Activated T-helper 1 cell treated with anti-CD3 and anti-CD28 coated beads, Interleukin-12 subunit alpha, Interleukin-12 subunit beta, Interleukin-2, Interleukin-4 antibody, amounts not matched to agents 30 ng/mL and 10 ng/mL and 1 ng/mL, durations not matched to agents 14 hours and 24 hours and 36 hours (primary cell): ENCODE measurements at regions of chr14 and their contacts with region 1.

Region 1: DNA sequence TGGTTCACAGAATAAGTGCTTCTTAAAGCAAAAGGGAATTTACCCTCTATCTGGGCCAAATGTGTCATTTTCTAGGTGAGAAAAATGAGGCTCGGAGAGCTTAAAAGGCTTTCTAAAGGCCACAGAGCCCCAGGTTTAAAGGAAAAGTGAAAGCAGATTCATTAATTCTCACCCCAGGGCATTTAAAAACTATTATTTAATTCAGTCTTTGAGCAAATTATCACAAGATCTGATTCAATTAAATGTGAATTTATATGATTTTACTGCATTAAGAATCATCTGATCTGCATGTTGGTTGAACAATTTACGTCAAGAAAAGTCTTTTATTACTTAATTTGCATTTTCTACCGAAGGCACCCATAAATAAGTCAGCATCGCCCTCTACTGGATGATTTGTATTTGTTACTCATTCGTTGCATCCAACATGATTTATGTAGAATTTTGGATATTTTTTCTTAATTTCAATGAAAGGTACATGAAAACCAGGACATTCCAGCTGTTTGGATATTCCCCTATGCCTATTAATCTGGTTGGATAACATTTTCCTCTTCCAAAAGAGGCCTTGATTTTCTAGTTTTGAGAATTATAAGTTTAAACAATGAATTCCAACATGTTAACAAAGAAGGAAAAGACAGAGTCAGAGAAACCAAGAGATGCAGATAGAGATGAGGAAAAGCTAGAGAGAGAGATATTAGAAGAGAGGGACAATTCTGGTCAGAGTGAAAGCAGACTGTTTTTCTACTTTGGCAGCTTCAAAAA is 19.1 kb upstream of the DHRS7 start:
- DNase-seq: no peak
- H3K4me3 Mint-ChIP-seq: peak overlapping the region; percentile 65
- H3K27ac Mint-ChIP-seq: peak overlapping the region; percentile 67
- H3K4me1 Mint-ChIP-seq: peaks cover 13% of the 10 kb centered on the region
- H3K27me3 Mint-ChIP-seq: no peaks in the 10 kb centered on the region

Region 2: GRCh38 chr14:59126710-59127432 is 1057.5 kb before region 1 on chr14:
- intact Hi-C with region 1: loop called (anchors 5 kb)
- DNase-seq: peak; percentile 1
- H3K4me3 Mint-ChIP-seq: no peak overlapping the region
- H3K27ac Mint-ChIP-seq: no peak overlapping the region
- H3K4me1 Mint-ChIP-seq: no peaks in the 10 kb centered on the region
- H3K27me3 Mint-ChIP-seq: peaks cover 2% of the 10 kb centered on the region

Region 3: DNA sequence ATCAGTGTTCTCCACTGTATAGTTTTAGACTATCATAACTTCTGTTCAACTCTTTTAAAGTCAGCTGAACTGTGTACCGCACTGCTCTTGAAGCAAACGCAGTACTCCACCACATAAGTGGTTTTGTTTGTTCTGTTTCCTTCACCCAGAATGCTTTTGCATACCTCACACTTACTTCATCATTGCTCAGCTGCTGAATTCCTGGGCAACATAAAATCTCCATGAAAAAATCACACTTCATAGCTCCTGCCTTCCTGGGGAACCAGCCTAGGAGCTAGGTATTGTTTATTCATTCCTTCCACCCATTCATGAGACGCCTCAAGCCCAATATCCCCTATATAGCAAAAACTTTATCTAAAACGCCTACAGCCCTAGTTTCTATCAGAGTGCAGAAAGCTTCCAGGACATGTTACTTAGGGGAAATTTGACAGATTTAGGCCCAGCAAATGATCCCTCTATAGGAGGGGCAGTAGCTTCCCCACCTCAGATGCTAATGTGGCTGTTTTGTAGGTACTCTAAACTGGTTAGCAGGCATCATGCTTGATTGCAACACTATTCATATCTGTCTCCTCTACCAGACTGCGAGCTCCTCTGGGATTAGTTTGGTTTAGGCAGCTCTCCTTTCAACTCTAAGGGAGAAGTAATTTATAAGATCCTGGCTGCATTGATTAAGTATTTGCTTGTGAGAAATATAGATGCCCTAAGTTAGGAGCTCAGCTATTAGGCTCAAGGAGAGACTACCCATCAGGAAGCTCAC is 219.9 kb before region 1 on chr14:
- intact Hi-C with region 1: loop called (anchors 1 kb)
- DNase-seq: no peak
- H3K4me3 Mint-ChIP-seq: peak overlapping the region; percentile 80
- H3K27ac Mint-ChIP-seq: no peak overlapping the region
- H3K4me1 Mint-ChIP-seq: no peaks in the 10 kb centered on the region
- H3K27me3 Mint-ChIP-seq: peaks cover 7% of the 10 kb centered on the region

Region 4: DNA sequence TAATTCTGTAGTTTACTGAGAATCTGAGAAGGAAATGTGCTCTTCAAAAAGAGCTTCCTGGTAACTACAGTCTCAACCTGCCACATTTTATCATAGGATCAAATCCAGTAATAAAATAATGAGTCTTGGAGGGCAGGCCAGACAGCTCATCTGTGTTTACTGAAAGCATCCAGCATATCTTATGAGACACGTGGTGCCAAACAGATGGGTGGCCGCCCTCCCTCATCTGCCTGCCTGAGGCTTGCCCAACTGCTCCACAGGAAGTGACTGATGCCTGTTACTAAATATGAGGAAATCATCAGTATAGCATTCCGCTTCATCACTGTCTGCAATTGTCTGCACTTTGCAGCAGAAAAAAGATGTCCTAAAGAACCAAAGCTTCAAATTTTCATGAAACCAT is 32.6 kb before region 1 on chr14:
- intact Hi-C with region 1: loop called (anchors 1 kb)
- DNase-seq: peak; percentile 50
- H3K4me3 Mint-ChIP-seq: peak overlapping the region; percentile 26
- H3K27ac Mint-ChIP-seq: peak overlapping the region; percentile 87
- H3K4me1 Mint-ChIP-seq: peaks cover 42% of the 10 kb centered on the region
- H3K27me3 Mint-ChIP-seq: no peaks in the 10 kb centered on the region

Region 5: DNA sequence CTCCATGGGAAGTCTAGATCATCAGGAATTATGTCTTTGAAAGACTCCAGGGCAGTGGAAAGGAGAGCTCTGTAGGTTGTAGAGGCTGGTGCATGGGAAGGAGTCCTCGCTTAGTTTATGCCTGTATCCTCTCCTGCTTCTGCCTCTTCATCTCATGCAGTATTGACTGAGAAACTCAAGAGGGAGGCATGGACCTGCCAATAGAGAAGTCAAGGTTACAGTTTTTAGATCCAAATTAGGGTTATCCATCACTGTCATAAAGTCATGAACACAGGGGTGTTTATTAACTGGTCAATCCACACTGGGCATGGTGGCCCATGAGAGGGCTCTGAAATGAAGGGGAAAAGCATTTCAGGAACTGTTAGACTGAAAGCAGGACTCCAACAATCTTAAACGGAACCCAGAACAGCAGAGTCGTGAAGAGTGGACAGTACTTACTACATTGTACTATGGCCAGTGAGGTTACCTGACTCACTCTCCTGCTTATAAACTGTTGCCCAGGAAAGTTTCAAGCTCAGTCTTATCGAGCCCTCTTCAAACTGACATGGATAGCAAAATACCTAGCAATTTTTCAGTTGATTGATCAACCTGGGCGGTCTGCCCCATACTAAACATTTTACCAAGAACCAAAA is 11.0 kb after region 1 on chr14:
- intact Hi-C with region 1: no loop called
- DNase-seq: no peak
- H3K4me3 Mint-ChIP-seq: no peak overlapping the region
- H3K27ac Mint-ChIP-seq: no peak overlapping the region
- H3K4me1 Mint-ChIP-seq: no peaks in the 10 kb centered on the region
- H3K27me3 Mint-ChIP-seq: peaks cover 9% of the 10 kb centered on the region

Region 6: DNA sequence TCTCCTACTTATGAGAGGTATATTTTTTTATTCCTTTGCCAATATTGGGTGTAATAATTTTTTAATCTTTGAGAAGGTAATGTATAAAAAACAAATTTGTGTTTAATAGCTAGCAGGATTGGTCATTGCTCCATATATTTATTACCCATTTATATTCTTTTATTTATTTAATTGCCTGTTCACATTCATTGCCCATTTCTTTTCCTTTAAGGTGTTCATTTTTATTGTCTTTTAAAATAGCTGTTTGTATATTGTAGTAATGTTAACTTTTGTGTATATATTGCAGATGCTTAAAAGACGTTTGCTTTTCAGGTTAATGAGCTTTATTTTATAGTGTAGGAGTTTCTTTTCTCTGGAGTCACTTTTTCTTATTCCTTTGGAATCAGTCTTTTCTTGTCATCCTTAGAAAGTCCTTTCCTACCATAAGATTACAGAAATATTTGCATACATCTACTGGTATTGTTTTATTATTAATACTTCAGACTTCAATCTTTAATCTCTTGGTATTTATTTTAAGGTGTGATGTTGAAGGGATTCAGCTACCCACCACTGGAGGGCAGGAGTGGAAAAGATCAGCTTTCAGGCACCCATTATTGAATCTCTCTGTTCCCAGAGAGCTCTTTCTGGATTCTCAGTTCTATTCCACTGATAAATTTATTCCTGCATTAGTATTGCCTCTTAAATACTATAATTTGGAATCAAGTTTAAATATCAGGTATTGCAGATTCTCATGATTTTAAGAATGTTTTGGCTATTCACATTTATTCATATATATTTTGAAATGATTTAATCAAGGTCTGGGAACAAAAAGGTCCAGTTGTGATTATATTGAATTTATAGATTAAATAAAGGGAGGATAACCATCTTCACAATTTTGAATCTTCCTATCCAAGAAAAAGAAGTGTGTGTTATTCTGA is 82.0 kb after region 1 on chr14:
- intact Hi-C with region 1: loop called (anchors 5 kb)
- DNase-seq: no peak
- H3K4me3 Mint-ChIP-seq: no peak overlapping the region
- H3K27ac Mint-ChIP-seq: no peak overlapping the region
- H3K4me1 Mint-ChIP-seq: peaks cover 13% of the 10 kb centered on the region
- H3K27me3 Mint-ChIP-seq: no peaks in the 10 kb centered on the region

Region 7: DNA sequence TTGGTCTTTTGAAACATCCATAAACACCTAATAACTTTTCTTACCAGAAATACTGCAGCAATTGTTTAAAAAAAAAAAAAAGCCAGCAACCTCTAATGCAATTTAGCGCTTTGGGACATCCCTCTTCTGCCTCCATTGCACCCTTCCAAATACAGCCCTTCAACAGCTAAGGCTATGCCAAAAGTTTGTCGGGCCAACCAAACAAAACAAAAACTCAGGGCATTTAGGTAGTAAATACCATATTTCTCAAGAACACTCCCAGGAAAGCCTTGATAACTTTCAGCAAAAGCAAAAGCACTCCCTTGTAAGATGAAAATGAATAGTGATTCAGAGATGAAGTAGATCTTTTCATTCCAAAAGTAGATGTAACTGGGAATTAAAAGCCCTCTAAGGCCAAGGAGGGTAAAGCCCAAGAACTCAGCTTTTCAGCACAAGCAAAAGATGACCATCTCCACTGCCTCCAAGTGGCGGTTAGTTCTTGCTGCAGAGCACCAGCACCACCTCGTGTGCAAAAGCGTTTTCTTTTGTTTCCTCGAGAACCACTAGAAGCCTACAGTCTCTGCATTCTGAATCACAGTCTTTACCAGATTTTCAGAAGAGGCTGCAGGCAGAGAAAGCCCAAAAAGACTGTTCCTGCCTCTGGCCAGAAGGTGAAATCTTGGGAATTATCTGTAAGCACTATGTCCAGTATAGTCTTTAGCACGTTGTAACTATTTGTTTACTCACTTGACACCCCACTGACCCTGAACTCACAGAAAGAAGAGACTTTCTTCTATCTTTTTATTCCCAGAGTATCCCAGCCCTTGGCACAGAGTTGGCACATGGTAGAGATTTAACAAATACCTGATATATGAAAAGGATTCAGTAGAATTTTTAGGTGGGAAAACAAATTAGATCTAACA is 377.8 kb after region 1 on chr14:
- intact Hi-C with region 1: loop called (anchors 10 kb)
- DNase-seq: no peak
- H3K4me3 Mint-ChIP-seq: no peak overlapping the region
- H3K27ac Mint-ChIP-seq: no peak overlapping the region
- H3K4me1 Mint-ChIP-seq: no peaks in the 10 kb centered on the region
- H3K27me3 Mint-ChIP-seq: peaks cover 8% of the 10 kb centered on the region